ENCODE measurements at regions of chr12 and their contacts with region 1.

Region 1: GRCh38 chr12:42144408-42145196 is at the start of gene GXYLT1:
- DNase-seq: peak; percentile 97
- H3K4me3 ChIP-seq: peak within 1 kb of the TSS; percentile 78 to 96 (median 93)
- H3K27ac ChIP-seq: peak within 1 kb of the TSS; percentile 65
- H3K4me1 ChIP-seq: peaks cover 31% of the 10 kb centered on the region
- H3K27me3 ChIP-seq: no peaks in the 10 kb centered on the region
- CTCF ChIP-seq: no peak
- total RNA-seq, gene GXYLT1: 14.2 to 15.2 TPM

Region 2: DNA sequence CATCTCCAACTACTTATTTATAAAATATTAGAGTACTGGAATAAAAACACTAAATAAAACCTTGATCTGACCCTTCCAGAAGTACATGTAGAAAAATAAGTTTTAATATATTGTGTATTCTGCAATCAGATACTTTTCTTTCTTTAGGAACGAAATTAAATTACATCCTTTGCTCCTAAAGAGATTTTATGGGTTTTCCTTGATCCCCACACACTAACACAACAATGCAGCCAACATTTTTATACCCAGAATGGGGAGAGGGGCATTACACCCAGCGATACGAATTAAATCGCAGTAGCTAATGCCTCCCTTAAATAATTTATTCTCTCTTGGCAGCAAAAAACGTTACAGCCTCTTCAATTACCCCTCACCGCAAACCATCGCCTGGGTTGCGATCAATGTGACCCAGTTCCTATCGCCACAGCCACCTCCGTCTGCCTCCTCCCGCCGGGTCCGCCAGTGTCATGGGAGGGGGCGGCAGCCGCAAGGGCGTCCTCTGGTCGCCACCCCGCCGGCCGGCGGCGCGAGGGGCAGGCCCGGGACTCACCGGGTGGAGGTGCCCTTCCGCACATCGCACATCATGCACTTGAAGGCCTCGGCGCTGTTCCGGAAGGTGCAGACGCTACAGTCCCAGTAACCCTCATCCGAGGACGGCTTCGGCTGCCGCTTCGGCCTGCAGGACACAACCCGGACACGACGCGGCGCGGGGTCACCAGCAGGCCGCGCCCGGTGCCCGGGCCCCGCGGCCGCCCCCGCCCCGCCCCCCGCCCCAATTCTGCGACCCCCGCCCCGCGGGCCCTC is 92.7 kb after region 1 on chr12:
- CTCF ChIA-PET with region 1: no interaction called
- dilution Hi-C with region 1: no loop called
- in situ Hi-C with region 1: no loop called
- intact Hi-C with region 1: loop called (anchors 2 kb)
- DNase-seq: peak; percentile 73
- H3K4me3 ChIP-seq: peak overlapping the region; percentile 67 to 82 (median 77)
- H3K27ac ChIP-seq: peak overlapping the region; percentile 56
- H3K4me1 ChIP-seq: peaks cover 8% of the 10 kb centered on the region
- H3K27me3 ChIP-seq: no peaks in the 10 kb centered on the region
- CTCF ChIP-seq: peak; percentile 34 to 65

Region 3: DNA sequence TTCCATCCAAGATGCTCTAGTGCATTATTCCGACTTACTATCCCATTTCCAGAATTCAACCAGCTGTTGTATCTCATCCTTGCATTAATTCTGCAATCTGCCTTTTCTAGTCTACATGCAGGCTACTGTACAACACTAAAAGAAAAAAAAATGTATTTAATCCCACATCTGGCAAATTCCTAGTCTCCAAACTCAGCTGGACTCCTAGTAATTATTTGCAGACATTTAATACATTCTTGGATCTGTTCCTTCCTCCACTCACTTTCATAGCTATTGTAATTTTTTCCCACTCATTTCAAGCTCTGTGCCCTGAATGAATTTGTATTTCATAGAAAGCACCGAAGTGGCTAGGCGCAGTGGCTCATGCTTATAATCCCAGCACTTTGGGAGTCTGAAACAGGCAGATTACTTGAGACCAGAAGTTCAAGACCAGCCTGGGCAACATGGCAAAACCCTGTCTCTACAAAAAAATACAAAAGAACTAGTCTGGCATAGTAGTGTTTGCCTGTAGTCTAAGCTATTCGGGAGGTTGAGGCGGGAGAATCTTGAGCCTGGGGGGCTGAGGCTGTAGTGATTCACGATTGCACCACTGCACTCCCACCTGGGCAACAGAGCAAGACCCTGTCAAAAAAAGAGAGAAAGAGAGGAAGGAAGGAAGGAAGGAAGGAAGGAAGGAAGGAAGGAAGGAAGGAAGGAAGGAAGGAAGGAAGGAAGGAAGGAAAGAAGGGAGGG is 133.0 kb after region 1 on chr12:
- CTCF ChIA-PET with region 1: interaction called, 19 read pairs
- dilution Hi-C with region 1: no loop called
- in situ Hi-C with region 1: no loop called
- intact Hi-C with region 1: no loop called
- DNase-seq: no peak
- H3K4me3 ChIP-seq: no peak overlapping the region
- H3K27ac ChIP-seq: no peak overlapping the region
- H3K4me1 ChIP-seq: no peaks in the 10 kb centered on the region
- H3K27me3 ChIP-seq: no peaks in the 10 kb centered on the region
- CTCF ChIP-seq: no peak

Region 4: DNA sequence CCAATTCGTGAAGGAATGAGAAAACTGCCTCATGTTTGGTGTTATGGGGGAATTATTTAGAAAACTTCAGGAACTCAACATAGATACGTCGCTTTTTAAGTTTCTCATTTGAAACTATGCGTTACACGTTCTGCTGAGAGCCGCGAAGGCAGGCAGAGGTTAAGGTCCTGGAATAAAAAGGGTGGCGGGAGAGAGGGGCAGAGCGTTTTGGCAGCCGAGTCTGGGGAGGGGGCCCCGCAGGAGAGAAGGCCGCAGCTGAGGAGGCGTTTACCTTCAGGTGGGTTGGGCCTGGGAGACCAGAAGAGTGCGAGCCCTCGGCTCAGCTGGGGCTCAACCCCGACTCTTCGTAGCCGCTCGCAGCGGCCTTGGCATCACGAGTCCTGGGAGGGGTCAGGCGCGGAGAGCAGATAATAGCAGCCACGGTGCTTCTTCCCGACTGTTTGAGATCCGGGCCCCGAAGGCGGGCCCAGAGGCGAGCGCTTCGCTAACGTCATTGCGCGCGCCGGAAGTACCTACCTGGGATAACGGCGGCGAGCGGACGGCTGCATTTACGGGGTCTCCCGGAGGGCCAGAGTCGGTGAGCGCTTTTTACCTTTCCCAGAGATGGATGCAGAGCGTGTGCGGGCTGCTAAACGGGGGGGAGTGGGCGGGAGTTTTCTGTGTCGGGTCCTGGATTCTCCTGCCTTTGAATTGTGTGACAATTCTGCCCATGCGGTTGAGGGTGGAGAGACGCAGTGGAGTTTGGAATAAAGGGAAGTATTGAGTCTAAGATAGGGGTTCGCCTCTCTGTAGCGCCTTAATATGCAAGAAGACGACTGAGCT is 181.3 kb after region 1 on chr12 and contains the starts of genes PPHLN1 and ZCRB1:
- CTCF ChIA-PET with region 1: no interaction called
- dilution Hi-C with region 1: no loop called
- in situ Hi-C with region 1: no loop called
- intact Hi-C with region 1: loop called (anchors 5 kb)
- DNase-seq: peak; percentile 83
- H3K4me3 ChIP-seq: peak within 1 kb of the TSS; percentile 64 to 88 (median 77)
- H3K27ac ChIP-seq: peak within 1 kb of the TSS; percentile 88
- H3K4me1 ChIP-seq: peaks cover 13% of the 10 kb centered on the region
- H3K27me3 ChIP-seq: no peaks in the 10 kb centered on the region
- CTCF ChIP-seq: no peak
- total RNA-seq, gene PPHLN1: 64.2 to 74.3 TPM
- total RNA-seq, gene ZCRB1: 24.5 to 49.0 TPM

Region 5: GRCh38 chr12:42568952-42569915 is 424.6 kb after region 1 on chr12:
- CTCF ChIA-PET with region 1: no interaction called
- dilution Hi-C with region 1: no loop called
- in situ Hi-C with region 1: loop called in 1 of 2 experiments (anchors 25 kb)
- intact Hi-C with region 1: no loop called
- DNase-seq: peak; percentile 48
- H3K4me3 ChIP-seq: no peak overlapping the region
- H3K27ac ChIP-seq: no peak overlapping the region
- H3K4me1 ChIP-seq: peaks cover 8% of the 10 kb centered on the region
- H3K27me3 ChIP-seq: no peaks in the 10 kb centered on the region
- CTCF ChIP-seq: peak; percentile 37 to 65

Region 6: DNA sequence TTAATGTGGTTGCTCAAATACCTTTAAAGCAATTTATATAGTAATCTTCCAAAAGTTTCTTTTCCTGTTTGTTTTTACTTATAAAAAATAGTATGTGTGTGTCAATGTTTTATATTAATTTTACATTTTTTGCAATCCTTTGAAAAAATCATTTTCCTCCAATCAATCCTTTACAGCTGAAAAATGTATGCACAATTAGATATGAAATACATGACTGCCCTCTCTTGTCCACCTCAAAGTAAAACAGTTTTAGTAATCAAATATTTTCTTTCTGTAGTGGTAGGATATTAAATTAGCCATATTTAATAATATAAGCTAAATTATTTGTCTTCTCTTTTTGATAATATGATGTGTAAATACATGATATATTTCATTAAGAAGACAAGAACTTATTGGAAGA is 1137.5 kb after region 1 on chr12:
- CTCF ChIA-PET with region 1: no interaction called
- dilution Hi-C with region 1: no loop called
- in situ Hi-C with region 1: loop called in 1 of 2 experiments (anchors 25 kb)
- intact Hi-C with region 1: loop called (anchors 10 kb)
- DNase-seq: no peak
- H3K4me3 ChIP-seq: no peak overlapping the region
- H3K27ac ChIP-seq: no peak overlapping the region
- H3K4me1 ChIP-seq: peaks cover 35% of the 10 kb centered on the region
- H3K27me3 ChIP-seq: no peaks in the 10 kb centered on the region
- CTCF ChIP-seq: peak; percentile 36 to 48

Region 7: DNA sequence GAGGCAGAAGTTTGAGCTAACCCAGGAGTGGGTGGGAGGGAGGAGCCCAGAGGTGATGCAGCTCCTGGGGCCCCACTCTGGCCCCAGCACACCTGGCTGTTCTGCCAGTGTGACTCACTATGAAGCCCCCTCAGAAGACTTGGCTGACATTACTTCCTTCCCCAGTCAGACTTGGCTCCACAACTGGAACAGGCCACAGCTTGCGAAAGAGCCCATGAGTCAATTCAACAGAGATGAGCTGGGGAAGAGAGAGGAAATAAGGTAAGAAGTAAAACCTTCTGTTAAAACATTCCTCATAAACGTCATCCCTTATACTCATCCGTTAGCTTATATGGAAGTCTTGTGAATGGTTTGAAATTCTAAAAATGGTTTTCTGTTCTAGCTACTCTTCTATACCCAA is 1161.5 kb after region 1 on chr12:
- CTCF ChIA-PET with region 1: no interaction called
- dilution Hi-C with region 1: no loop called
- in situ Hi-C with region 1: loop called in 1 of 2 experiments (anchors 25 kb)
- intact Hi-C with region 1: no loop called
- DNase-seq: peak; percentile 99
- H3K4me3 ChIP-seq: peak overlapping the region in 1 of 3 experiments; percentile 8
- H3K27ac ChIP-seq: peak overlapping the region; percentile 74
- H3K4me1 ChIP-seq: peaks cover 37% of the 10 kb centered on the region
- H3K27me3 ChIP-seq: no peaks in the 10 kb centered on the region
- CTCF ChIP-seq: no peak